PC-9 (cell line): ENCODE measurements at regions of chr6 and their contacts with region 1.

Region 1: GRCh38 chr6:27312146-27312949 is at the start of gene POM121L2:
- DNase-seq: peak; percentile 64 to 87
- H3K4me3 ChIP-seq: peak within 1 kb of the TSS; percentile 68
- H3K27ac ChIP-seq: no peak within 1 kb of the TSS
- H3K4me1 ChIP-seq: no peaks in the 10 kb centered on the region
- H3K27me3 ChIP-seq: 0 out of 2 replicates have a peak, but pooled peaks cover 3% of the 10 kb centered on the region
- CTCF ChIP-seq: peak; percentile 79
- total RNA-seq, gene POM121L2: 0.26 TPM in 1 of 2 replicates, not detected in the other

Region 2: GRCh38 chr6:27295301-27296081 is 16.9 kb before region 1 on chr6:
- CTCF ChIA-PET with region 1: interaction called, 15 read pairs
- POLR2A ChIA-PET with region 1: interaction called, 4 read pairs
- intact Hi-C with region 1: no loop called
- DNase-seq: peak; percentile 49 to 73
- H3K4me3 ChIP-seq: peak overlapping the region; percentile 84
- H3K27ac ChIP-seq: no peak overlapping the region
- H3K4me1 ChIP-seq: peaks cover 27% of the 10 kb centered on the region
- H3K27me3 ChIP-seq: no peaks in the 10 kb centered on the region
- CTCF ChIP-seq: no peak

Region 3: DNA sequence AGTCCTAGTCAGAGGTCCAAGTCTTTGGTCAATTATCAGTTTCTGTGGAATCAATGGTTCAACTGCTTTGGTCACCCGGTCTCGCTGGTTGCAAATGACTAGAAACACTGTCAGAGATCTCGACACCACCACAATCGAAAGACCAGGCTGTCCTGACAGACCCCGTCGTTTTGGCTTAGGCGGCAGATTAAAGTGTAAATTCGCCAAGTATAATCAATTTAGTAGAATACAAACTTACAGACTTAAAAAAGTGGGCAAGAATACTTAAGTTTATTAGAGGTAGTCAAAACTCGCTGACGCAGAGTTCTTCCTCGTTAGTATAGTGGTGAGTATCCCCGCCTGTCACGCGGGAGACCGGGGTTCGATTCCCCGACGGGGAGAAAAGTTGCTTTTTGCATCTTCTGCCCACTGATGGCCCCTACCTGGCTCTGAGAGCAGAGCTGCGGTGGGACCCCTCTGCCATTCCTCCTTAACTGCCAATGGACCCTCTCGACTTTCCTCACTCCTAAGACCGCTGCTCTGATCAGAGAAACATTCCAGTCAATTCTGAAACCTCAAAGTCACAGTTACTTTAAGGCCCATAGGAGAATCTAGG is 191.2 kb after region 1 on chr6:
- CTCF ChIA-PET with region 1: no interaction called
- POLR2A ChIA-PET with region 1: no interaction called
- intact Hi-C with region 1: loop called (anchors 5 kb)
- DNase-seq: peak; percentile 66 to 75
- H3K4me3 ChIP-seq: peak overlapping the region; percentile 73
- H3K27ac ChIP-seq: peak overlapping the region; percentile 57
- H3K4me1 ChIP-seq: peaks cover 26% of the 10 kb centered on the region
- H3K27me3 ChIP-seq: no peaks in the 10 kb centered on the region
- CTCF ChIP-seq: no peak

Region 4: GRCh38 chr6:27518881-27519795 is 206.8 kb after region 1 on chr6:
- CTCF ChIA-PET with region 1: no interaction called
- POLR2A ChIA-PET with region 1: no interaction called
- intact Hi-C with region 1: loop called (anchors 5 kb)
- DNase-seq: peak; percentile 72 to 85
- H3K4me3 ChIP-seq: peak overlapping the region; percentile 87
- H3K27ac ChIP-seq: peak overlapping the region; percentile 50
- H3K4me1 ChIP-seq: peaks cover 19% of the 10 kb centered on the region
- H3K27me3 ChIP-seq: no peaks in the 10 kb centered on the region
- CTCF ChIP-seq: peak; percentile 86

Region 5: DNA sequence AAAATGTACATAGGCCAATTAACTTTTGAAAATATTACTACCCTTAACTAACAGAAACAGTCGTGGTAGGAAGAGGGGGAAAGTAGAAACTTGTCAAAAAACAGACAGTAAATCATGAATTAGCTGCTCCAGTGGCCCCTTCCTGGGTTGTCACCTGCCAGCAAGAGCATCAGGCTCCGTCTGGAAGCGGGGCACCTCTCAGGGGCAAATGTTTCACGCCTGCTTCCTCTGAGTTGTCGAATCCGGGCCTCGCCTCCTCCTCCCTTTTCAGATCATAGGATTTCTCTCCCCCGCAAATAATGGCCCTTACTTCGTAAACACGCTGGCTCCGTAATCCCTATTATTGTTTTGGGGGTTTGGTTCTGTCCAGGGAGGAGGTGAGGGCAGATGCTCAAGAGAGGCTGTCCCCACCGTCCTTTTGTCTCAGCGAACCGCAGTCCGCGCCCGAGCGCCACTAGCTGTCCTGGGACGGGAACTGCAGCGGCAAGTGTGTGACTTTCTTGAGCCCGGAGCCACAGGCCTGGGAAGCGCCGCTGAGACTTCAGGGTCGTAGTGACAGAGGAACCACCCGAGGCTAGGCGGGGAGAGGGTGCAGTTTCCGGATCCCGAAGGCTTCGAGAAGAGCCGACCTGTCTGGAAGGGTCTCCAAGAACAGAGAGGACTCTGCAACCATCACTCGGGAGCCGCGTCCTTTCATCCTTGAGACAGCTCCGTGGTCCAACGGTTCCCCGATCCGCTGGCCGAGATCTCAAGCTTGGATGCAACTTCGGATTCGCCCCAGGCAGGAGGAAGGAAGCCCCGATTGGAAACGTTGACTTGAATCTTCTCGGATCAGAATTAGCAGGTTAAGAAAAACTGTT is 375.0 kb after region 1 on chr6:
- CTCF ChIA-PET with region 1: no interaction called
- POLR2A ChIA-PET with region 1: no interaction called
- intact Hi-C with region 1: loop called (anchors 2 kb)
- DNase-seq: peak; percentile 69 to 87
- H3K4me3 ChIP-seq: peak overlapping the region; percentile 61
- H3K27ac ChIP-seq: peak overlapping the region; percentile 6; the same call in 1 of the 2 replicates
- H3K4me1 ChIP-seq: peaks cover 6% of the 10 kb centered on the region; the same call in 1 of the 2 replicates
- H3K27me3 ChIP-seq: no peaks in the 10 kb centered on the region
- CTCF ChIP-seq: peak; percentile 73; the same call in 1 of the 2 replicates